Activated T-helper 1 cell treated with anti-CD3 and anti-CD28 coated beads, Interleukin-12 subunit alpha, Interleukin-12 subunit beta, Interleukin-2, Interleukin-4 antibody, amounts not matched to agents 30 ng/mL and 10 ng/mL and 1 ng/mL, durations not matched to agents 14 hours and 24 hours and 36 hours (primary cell): ENCODE measurements at regions of chr20 and their contacts with region 1.

Region 1: GRCh38 chr20:5126512-5127203 is at the start of gene CDS2:
- DNase-seq: peak; percentile 100
- H3K4me3 Mint-ChIP-seq: peak within 1 kb of the TSS; percentile 96
- H3K27ac Mint-ChIP-seq: peak within 1 kb of the TSS; percentile 93
- H3K4me1 Mint-ChIP-seq: peaks cover 52% of the 10 kb centered on the region
- H3K27me3 Mint-ChIP-seq: no peaks in the 10 kb centered on the region
- total RNA-seq, gene CDS2: 39.8 and 42.5 TPM in 2 replicates

Region 2: GRCh38 chr20:4813863-4814695 is 312.6 kb before region 1 on chr20:
- intact Hi-C with region 1: loop called (anchors 1 kb)
- DNase-seq: peak; percentile 79
- H3K4me3 Mint-ChIP-seq: peak overlapping the region; percentile 89
- H3K27ac Mint-ChIP-seq: peak overlapping the region; percentile 99
- H3K4me1 Mint-ChIP-seq: peaks cover 63% of the 10 kb centered on the region
- H3K27me3 Mint-ChIP-seq: no peaks in the 10 kb centered on the region

Region 3: GRCh38 chr20:5113615-5113986 is 13.1 kb before region 1 on chr20:
- intact Hi-C with region 1: no loop called
- DNase-seq: no peak
- H3K4me3 Mint-ChIP-seq: peak overlapping the region; percentile 96
- H3K27ac Mint-ChIP-seq: peak overlapping the region; percentile 95
- H3K4me1 Mint-ChIP-seq: peaks cover 53% of the 10 kb centered on the region
- H3K27me3 Mint-ChIP-seq: no peaks in the 10 kb centered on the region

Region 4: DNA sequence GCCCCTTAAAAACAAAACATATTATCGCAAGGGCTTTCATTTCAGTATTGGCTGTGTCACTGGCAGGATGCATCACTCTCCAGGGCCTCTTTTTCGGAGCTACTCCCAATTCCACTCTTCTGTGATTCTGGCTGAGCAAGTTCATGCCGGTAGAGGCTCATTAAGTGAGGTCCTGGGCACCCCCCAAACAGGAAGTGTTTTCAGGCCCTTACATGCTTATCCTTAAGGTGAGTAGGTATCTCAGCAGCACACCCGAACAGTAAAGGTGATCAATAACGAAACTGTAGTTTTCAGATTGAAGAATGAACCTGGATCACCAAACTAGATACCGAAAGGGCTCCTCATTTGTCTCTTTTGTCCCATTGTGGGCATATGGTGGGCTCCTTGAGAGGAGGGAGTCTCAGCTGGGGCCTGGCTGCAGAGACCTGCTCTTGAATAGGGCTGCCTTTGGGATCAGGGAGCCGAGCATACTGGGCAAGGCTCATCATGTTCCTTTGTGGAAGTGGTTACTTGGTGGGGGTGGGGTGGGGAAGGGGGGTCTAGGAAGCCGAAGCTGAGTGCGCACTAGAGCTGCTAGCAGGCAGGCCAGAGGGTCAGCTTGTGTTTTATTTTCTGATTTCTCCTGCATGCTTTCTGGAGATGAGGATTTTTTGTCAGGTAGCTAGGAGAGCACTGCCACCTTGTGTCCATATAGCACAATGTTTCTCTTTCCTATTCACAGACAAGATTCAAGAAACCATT is 65.3 kb after region 1 on chr20:
- intact Hi-C with region 1: loop called (anchors 1 kb)
- DNase-seq: peak; percentile 17
- H3K4me3 Mint-ChIP-seq: no peak overlapping the region
- H3K27ac Mint-ChIP-seq: peak overlapping the region; percentile 73
- H3K4me1 Mint-ChIP-seq: peaks cover 20% of the 10 kb centered on the region
- H3K27me3 Mint-ChIP-seq: no peaks in the 10 kb centered on the region

Region 5: DNA sequence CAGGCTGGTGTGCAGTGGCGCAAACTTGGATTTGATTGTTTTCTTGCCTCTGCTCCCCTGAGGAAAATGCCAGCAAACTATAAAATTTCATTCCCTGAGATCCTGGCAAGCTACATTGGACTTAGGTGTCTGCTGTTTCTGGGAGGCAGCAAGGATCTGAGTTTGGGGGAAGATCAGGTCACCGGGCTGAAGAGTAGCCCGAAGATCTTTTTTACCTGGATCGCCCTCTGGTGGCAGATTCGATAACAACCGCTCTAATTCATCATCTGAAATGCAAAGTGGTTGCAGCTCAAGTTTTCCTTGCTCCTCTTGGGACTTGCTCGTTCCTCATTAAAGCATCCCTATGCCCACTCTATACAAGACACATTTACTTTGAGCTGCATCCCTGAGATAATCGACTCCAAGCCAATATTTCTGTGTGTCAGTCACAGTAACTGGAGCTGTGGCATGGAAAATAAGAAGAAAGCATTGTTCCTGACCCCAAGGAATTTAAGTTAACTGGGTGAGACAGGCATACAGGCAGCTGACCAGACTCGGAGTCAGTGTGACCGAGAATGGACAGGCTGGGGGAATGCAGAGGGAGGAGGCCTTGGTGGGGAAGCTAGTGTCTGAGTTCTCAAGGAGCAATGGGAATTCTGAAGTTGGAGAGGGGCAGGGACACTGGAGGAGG is 321.9 kb after region 1 on chr20:
- intact Hi-C with region 1: loop called (anchors 2 kb)
- DNase-seq: peak; percentile 17
- H3K4me3 Mint-ChIP-seq: no peak overlapping the region
- H3K27ac Mint-ChIP-seq: no peak overlapping the region
- H3K4me1 Mint-ChIP-seq: no peaks in the 10 kb centered on the region
- H3K27me3 Mint-ChIP-seq: peaks cover 10% of the 10 kb centered on the region

Region 6: GRCh38 chr20:5844063-5844681 is 717.5 kb after region 1 on chr20:
- intact Hi-C with region 1: loop called (anchors 1 kb)
- DNase-seq: peak; percentile 41
- H3K4me3 Mint-ChIP-seq: peak overlapping the region; percentile 70
- H3K27ac Mint-ChIP-seq: peak overlapping the region; percentile 84
- H3K4me1 Mint-ChIP-seq: peaks cover 35% of the 10 kb centered on the region
- H3K27me3 Mint-ChIP-seq: peaks cover 3% of the 10 kb centered on the region